GM12878 (cell line): ENCODE measurements at regions of chr3 and their contacts with region 1.

Region 1: DNA sequence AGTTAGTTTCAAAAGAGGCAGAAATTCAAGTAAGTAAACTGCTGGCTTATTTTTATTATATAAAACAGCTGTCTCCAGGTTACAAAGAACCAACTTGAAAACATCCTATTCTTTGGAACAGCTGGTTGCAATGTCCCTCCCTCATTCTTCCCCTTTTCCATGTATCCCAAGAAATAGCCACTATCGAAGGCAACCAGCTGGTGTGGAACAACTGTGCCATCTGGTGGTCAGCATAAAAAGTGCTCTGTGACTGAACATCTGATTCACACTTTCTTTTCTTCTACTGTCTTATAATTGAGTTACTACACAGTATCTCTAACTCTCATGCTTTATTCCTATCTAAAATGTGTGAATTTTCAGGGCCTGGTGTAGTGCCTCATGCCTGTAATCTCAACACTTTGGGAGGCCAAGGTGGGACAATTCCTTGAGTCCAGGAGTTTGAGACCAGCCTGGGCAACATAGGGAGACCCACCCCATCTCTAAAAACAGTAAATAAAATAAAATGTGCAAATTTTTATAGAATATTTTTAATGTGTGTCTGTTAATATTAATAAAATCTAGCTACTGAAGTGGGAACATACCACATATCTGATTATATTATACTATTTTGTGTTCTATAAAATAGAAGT is 9.6 kb downstream of the OSBPL11 start:
- DNase-seq: no peak
- ATAC-seq: peak; percentile 66
- H3K4me3 ChIP-seq: no peak overlapping the region
- H3K27ac ChIP-seq: no peak overlapping the region
- H3K4me1 ChIP-seq: peaks cover 10% of the 10 kb centered on the region; the same call in 1 of the 2 replicates
- H3K27me3 ChIP-seq: no peaks in the 10 kb centered on the region
- CTCF ChIP-seq: peak; percentile 82 to 91 (median 91)
- EP300 ChIP-seq: no peak
- POLR2A ChIP-seq: no peak
- RAD21 ChIP-seq: peak; percentile 93

Region 2: GRCh38 chr3:124935264-124935663 is 650.4 kb before region 1 on chr3:
- CTCF ChIA-PET with region 1: interaction called, 15 read pairs
- POLR2A ChIA-PET with region 1: interaction called, 3 read pairs
- RAD21 ChIA-PET with region 1: interaction called, 14 read pairs
- SMC1A ChIA-PET with region 1: interaction called, 3 read pairs
- in situ Hi-C with region 1: no loop called
- intact Hi-C with region 1: no loop called
- DNase-seq: no peak
- ATAC-seq: peak; percentile 89
- H3K4me3 ChIP-seq: no peak overlapping the region
- H3K27ac ChIP-seq: no peak overlapping the region
- H3K4me1 ChIP-seq: no peaks in the 10 kb centered on the region
- H3K27me3 ChIP-seq: no peaks in the 10 kb centered on the region; a peak in 1 of 4 replicates
- CTCF ChIP-seq: no peak
- EP300 ChIP-seq: no peak
- POLR2A ChIP-seq: no peak
- RAD21 ChIP-seq: no peak

Region 3: DNA sequence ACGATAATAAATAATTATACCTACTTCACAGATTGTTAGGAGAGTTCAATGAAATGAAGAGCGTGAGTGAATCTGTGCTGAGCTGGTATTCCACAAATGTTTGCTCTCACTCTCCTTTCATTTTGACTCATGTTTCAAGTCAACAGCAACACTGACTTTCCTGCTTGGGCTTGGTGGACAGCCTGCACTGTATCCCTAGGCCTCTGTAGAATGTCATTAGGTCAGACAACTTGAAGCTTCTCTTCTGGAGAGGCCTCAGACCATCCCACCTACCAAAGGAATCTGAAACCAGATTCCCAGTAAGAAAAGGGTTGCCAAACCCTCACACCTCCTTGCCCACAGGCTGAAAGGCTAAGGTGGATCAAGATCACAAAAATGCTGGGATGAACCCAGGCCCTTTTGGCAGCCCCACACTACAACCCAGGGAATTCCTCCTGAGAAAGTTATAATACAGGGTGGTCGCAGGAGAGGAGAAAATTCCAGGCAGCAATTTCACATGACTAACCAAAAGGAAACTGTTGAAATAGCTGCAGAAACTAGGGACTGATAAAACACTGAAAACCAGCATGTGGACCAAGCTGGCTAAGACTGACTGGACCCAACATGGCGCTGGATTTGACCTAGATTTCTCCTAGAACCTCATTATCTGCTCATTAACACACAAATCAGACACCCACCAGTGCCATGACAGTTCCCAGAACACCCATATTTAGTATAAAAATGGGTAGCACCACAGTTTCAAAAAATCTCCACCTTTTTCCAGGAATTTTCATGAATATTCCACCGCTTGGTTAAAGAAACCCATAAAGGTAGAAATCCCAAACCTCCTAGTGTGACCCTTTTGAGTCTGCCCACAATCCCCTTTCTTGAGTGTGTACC is 153.6 kb before region 1 on chr3:
- CTCF ChIA-PET with region 1: interaction called, 90 read pairs
- POLR2A ChIA-PET with region 1: interaction called, 4 read pairs
- RAD21 ChIA-PET with region 1: interaction called, 6 read pairs
- SMC1A ChIA-PET with region 1: interaction called, 61 read pairs
- in situ Hi-C with region 1: no loop called
- intact Hi-C with region 1: no loop called
- DNase-seq: no peak
- ATAC-seq: no peak
- H3K4me3 ChIP-seq: no peak overlapping the region
- H3K27ac ChIP-seq: no peak overlapping the region; the same call in 1 of the 2 replicates
- H3K4me1 ChIP-seq: peaks cover 25% of the 10 kb centered on the region
- H3K27me3 ChIP-seq: no peaks in the 10 kb centered on the region
- CTCF ChIP-seq: no peak
- EP300 ChIP-seq: no peak
- POLR2A ChIP-seq: no peak
- RAD21 ChIP-seq: no peak

Region 4: DNA sequence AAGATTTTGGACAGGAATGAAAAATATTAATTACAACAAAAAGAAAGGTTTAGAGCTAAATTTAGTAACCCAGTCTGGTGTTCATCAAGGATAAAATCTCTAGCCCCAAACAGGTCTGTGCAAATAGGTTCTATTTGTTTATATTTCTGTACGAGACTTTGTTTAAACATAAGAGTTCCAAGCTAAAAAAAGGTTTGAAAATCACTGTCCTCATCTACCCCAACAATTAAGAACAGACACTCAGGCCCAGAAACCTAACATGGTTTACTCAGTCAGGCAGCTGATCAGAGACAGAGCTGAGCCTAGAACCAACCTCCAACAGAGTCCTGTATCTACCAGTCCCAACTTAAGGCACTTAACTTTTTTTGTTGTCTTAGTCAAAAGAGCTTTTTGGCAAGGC is 115.0 kb before region 1 on chr3:
- CTCF ChIA-PET with region 1: interaction called, 26 read pairs
- POLR2A ChIA-PET with region 1: no interaction called
- RAD21 ChIA-PET with region 1: interaction called, 3 read pairs
- SMC1A ChIA-PET with region 1: interaction called, 11 read pairs
- in situ Hi-C with region 1: no loop called
- intact Hi-C with region 1: loop called (anchors 10 kb)
- DNase-seq: no peak
- ATAC-seq: no peak
- H3K4me3 ChIP-seq: no peak overlapping the region
- H3K27ac ChIP-seq: no peak overlapping the region
- H3K4me1 ChIP-seq: no peaks in the 10 kb centered on the region
- H3K27me3 ChIP-seq: no peaks in the 10 kb centered on the region
- CTCF ChIP-seq: no peak
- EP300 ChIP-seq: no peak
- POLR2A ChIP-seq: no peak
- RAD21 ChIP-seq: no peak

Region 5: DNA sequence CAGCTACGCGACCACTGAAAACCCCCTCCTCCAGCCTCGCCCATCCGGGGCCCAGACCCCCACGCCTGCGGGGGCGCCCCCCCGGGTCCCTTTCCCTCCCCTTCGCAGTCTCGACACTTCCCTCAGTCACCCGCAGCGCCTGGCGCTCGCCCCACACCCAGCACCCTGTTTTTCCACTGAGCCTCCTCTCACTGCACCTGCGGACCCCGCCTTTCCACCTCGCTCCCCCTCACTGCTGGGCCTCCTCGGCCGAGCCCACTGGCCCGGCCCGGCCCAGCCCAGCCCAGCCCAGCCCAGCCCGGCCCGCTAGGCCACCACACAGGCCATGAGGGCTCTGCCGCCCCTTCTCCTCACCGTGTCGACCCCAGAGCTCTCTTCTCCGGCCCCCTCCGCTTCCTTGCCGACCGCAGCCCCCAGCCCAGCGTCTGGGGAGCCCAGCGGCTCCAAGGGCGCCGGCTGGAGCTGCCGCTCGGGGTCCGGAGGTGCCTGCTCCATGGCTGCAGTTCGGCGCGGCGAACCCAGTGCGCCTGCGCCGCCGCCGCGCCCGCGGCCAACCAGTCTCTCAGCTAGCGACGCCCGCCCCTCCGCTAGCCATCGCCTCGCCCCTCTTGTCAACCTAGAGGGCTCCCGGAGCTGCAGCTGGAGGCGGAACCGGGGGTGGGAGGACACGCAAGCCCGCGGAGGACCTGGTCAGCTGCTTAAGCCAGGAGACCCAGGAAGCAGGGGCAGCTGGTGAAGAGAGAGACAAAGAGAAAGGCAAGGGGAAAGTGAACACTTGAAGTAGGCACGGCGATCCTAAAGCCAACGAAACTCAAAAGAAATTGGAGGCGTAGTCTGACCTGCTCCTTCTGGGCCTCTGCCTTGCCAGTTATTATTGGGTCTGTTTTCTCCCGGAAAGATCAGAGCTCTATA is 65.8 kb before region 1 on chr3 and contains the start of gene SNX4:
- CTCF ChIA-PET with region 1: interaction called, 31 read pairs
- POLR2A ChIA-PET with region 1: interaction called, 15 read pairs
- RAD21 ChIA-PET with region 1: interaction called, 10 read pairs
- SMC1A ChIA-PET with region 1: interaction called, 12 read pairs
- in situ Hi-C with region 1: no loop called
- intact Hi-C with region 1: no loop called
- DNase-seq: peak; percentile 63
- ATAC-seq: peak; percentile 93
- H3K4me3 ChIP-seq: peak within 1 kb of the TSS; percentile 99
- H3K27ac ChIP-seq: peak within 1 kb of the TSS; percentile 82
- H3K4me1 ChIP-seq: peaks cover 15% of the 10 kb centered on the region
- H3K27me3 ChIP-seq: no peaks in the 10 kb centered on the region
- CTCF ChIP-seq: no peak
- EP300 ChIP-seq: no peak
- POLR2A ChIP-seq: peak; percentile 92
- RAD21 ChIP-seq: no peak
- polyA plus RNA-seq, gene SNX4: 33.4 to 42.0 TPM